Activated CD8-positive, alpha-beta T cell treated with anti-CD3 and anti-CD28 coated beads, Interleukin-2, amount 10 ng/mL, durations not matched to agents 7 days and 5 days (primary cell): ENCODE measurements at regions of chr11 and their contacts with region 1.

Region 1: DNA sequence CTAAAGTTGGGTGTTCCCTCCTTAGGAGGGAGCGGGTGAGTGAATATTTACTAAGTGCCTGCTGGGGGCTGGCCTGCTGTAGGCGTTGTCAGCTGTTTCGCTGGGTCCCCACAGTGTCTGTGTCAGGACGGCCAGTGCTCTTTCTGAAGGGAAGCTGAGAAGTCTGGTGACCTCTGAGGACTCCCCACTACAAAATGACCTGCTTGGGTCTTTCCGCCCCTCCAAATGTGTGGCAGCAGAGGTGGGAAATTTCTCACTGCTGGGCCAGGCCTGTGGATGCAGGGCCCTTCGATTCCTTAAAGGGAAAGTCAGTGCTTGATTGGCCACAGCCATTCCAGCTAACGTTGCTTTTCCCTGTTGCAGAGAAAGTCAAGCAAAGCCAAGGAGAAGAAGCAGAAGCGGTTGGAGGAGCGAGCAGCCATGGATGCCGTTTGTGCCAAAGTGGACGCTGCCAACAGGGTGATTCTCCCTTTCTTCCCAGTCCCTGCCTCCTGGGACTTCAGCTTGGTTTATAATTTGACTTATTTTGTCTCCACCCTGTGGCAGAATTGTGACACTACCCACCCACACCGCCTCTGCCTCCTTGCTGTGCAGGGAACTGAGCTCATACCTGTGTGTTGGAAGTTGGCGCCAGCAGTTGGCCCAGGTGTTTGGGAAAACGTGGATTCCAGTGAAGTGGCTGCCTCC is 6.8 kb downstream of the NAA40 start:
- DNase-seq: peak; percentile 64
- ATAC-seq: peak; percentile 87
- H3K4me3 Mint-ChIP-seq: no peak overlapping the region
- H3K27ac Mint-ChIP-seq: no peak overlapping the region
- H3K4me1 Mint-ChIP-seq: peaks cover 18% of the 10 kb centered on the region
- H3K27me3 Mint-ChIP-seq: no peaks in the 10 kb centered on the region

Region 2: GRCh38 chr11:63768237-63769043 is 177.2 kb before region 1 on chr11 and contains the start of gene ZFTA:
- CTCF ChIA-PET with region 1: interaction called, 30 read pairs
- POLR2A ChIA-PET with region 1: no interaction called
- DNase-seq: peak; percentile 64
- ATAC-seq: peak; percentile 66
- H3K4me3 Mint-ChIP-seq: peak within 1 kb of the TSS; percentile 92
- H3K27ac Mint-ChIP-seq: peak within 1 kb of the TSS; percentile 81
- H3K4me1 Mint-ChIP-seq: peaks cover 15% of the 10 kb centered on the region
- H3K27me3 Mint-ChIP-seq: peaks cover 27% of the 10 kb centered on the region
- total RNA-seq, gene ZFTA: 4.5 to 5.6 TPM

Region 3: GRCh38 chr11:63845303-63845702 is 100.3 kb before region 1 on chr11:
- CTCF ChIA-PET with region 1: interaction called, 188 read pairs
- POLR2A ChIA-PET with region 1: no interaction called
- DNase-seq: no peak
- ATAC-seq: no peak
- H3K4me3 Mint-ChIP-seq: no peak overlapping the region
- H3K27ac Mint-ChIP-seq: no peak overlapping the region
- H3K4me1 Mint-ChIP-seq: peaks cover 80% of the 10 kb centered on the region
- H3K27me3 Mint-ChIP-seq: no peaks in the 10 kb centered on the region

Region 4: GRCh38 chr11:63916837-63917691 is 28.6 kb before region 1 on chr11 and contains the start of gene RCOR2:
- CTCF ChIA-PET with region 1: interaction called, 10 read pairs
- POLR2A ChIA-PET with region 1: no interaction called
- DNase-seq: peak; percentile 69
- ATAC-seq: peak; percentile 77
- H3K4me3 Mint-ChIP-seq: peak within 1 kb of the TSS; percentile 78
- H3K27ac Mint-ChIP-seq: no peak within 1 kb of the TSS
- H3K4me1 Mint-ChIP-seq: peaks cover 12% of the 10 kb centered on the region
- H3K27me3 Mint-ChIP-seq: peaks cover 8% of the 10 kb centered on the region
- total RNA-seq, gene RCOR2: 0.55 to 0.60 TPM

Region 5: GRCh38 chr11:63961608-63962412 is 16.2 kb after region 1 on chr11:
- CTCF ChIA-PET with region 1: interaction called, 16 read pairs
- POLR2A ChIA-PET with region 1: interaction called, 6 read pairs
- DNase-seq: peak; percentile 60
- ATAC-seq: peak; percentile 76
- H3K4me3 Mint-ChIP-seq: no peak overlapping the region
- H3K27ac Mint-ChIP-seq: no peak overlapping the region
- H3K4me1 Mint-ChIP-seq: peaks cover 20% of the 10 kb centered on the region
- H3K27me3 Mint-ChIP-seq: no peaks in the 10 kb centered on the region